OCI-LY7 (cell line): ENCODE measurements at regions of chr14 and their contacts with region 1.

Region 1: GRCh38 chr14:77554207-77554606 is 55.6 kb upstream of the ISM2 start:
- DNase-seq: no peak
- H3K4me3 ChIP-seq: no peak overlapping the region
- H3K27ac ChIP-seq: no peak overlapping the region
- H3K4me1 ChIP-seq: no peaks in the 10 kb centered on the region
- CTCF ChIP-seq: no peak

Region 2: GRCh38 chr14:77301103-77301502 is 253.1 kb before region 1 on chr14:
- CTCF ChIA-PET with region 1: no interaction called
- POLR2A ChIA-PET with region 1: no interaction called
- intact Hi-C with region 1: loop called (anchors 5 kb)
- DNase-seq: peak; percentile 70
- H3K4me3 ChIP-seq: no peak overlapping the region
- H3K27ac ChIP-seq: no peak overlapping the region
- H3K4me1 ChIP-seq: no peaks in the 10 kb centered on the region
- CTCF ChIP-seq: peak; percentile 91

Region 3: DNA sequence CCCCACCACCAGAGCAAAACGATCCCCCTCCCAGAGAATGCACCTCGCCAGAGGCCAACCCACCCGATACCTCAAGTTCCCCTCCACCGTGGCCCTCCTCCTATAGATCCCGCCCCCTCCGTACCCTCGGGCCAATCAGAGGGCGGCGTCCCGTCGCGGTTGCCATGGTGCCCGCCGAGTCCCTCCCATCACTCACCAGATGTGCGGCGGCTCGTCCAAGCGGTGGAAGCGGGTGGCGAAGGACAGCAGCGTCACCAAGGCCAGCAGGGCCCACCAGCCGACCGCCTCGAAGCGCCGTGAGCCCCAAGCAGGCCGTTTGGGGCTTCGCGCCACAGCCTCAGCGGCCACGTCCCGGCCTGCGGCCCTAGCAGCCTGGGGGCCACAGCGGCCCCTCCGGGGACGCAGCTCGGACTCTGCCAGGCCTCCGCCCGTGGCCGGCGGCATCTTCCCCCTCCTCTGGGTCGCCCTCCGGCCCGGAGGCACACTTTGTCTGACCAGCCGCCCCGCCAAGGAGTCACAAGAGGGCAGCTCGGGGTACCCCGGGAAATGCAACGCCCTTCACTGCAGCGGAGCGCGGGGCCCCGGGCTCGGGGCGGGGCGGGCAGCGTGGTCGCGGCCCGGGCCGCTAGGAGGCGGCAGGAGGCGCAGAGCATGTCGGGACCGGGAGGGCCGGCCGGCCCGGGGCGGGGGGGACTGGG is 233.8 kb before region 1 on chr14 and contains the start of gene POMT2:
- CTCF ChIA-PET with region 1: no interaction called
- POLR2A ChIA-PET with region 1: no interaction called
- intact Hi-C with region 1: loop called (anchors 2 kb)
- DNase-seq: peak; percentile 92
- H3K4me3 ChIP-seq: peak within 1 kb of the TSS; percentile 81
- H3K27ac ChIP-seq: peak within 1 kb of the TSS; percentile 80
- H3K4me1 ChIP-seq: peaks cover 25% of the 10 kb centered on the region
- CTCF ChIP-seq: peak; percentile 51; the same call in 1 of the 2 replicates
- total RNA-seq, gene POMT2: 5.9 and 8.2 TPM in 2 replicates

Region 4: DNA sequence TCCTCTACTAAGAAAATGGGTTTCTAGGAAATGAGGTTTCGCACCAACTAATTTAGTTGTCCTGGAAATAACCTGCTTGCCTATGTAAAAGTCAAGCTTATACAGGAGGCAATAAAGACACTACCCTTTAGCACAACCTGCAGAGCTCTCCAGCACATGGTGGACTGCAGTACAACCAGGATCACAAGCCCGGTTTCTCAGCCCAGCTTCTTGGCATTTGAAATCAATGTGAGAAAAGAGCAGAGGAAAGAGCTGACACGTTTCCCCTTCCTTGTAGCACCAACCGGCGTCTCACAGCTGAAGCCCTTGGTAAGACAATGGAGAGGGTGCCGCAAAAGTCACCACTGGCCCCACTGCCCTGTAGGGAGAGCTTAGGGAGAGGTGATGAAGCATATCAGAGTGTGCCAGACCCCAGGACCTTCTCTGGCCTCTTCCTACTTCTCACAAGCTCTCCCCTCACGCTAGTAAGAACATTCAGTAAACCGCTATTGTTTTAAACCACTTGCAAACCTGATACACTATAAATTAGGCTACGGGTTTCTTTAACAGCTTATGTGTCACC is 53.6 kb after region 1 on chr14:
- CTCF ChIA-PET with region 1: no interaction called
- POLR2A ChIA-PET with region 1: no interaction called
- intact Hi-C with region 1: no loop called
- DNase-seq: no peak
- H3K4me3 ChIP-seq: no peak overlapping the region
- H3K27ac ChIP-seq: no peak overlapping the region
- H3K4me1 ChIP-seq: peaks cover 35% of the 10 kb centered on the region
- CTCF ChIP-seq: no peak

Region 5: GRCh38 chr14:78143489-78144145 is 589.4 kb after region 1 on chr14:
- CTCF ChIA-PET with region 1: no interaction called
- POLR2A ChIA-PET with region 1: no interaction called
- intact Hi-C with region 1: no loop called
- DNase-seq: no peak
- H3K4me3 ChIP-seq: no peak overlapping the region
- H3K27ac ChIP-seq: no peak overlapping the region
- H3K4me1 ChIP-seq: no peaks in the 10 kb centered on the region
- CTCF ChIP-seq: no peak